ENCODE measurements at regions of chr20 and their contacts with region 1.

Region 1: DNA sequence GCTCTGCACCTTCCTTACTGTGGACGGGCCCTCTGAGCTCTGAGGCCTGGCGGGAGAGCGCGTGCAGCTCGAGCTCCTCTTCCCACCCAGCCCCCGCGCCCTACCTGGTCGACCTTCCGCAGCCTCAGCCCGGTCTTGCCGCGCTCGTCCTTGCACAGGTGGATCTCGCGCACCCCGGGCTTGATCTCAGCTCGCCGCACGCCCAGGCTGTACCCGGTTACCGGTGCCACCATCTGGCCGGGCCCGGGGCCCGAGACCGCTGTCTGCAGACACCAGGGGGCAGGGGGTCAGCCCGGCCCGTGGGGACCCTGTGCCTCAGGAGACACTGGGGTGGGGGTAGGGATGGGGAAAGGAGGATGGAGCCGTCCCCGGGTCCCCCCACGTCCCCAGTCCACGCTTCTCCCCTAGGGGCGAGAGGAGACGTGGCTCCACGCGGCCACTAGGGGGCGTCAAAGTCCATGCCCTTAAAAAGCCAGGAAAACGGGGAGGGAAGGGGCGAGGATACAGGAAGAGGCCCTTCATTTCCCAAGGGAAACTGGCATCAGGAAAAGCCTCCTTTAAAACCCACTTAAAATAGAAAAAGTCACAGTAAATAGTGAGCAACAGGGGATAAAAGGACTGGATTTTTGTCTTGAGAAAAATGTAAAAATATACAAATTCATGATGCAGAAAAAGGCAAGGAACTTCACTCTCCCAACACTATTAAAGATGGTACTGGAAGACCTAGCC is 15.5 kb downstream of the SDCBP2 start:
- DNase-seq: peak; percentile 73
- H3K4me3 ChIP-seq: peak overlapping the region in 1 of 4 donors; percentile 27
- H3K27ac ChIP-seq: no peak overlapping the region
- H3K4me1 ChIP-seq: peaks cover 0 to 9% (median 4%) of the 10 kb centered on the region in 4 donors
- H3K27me3 ChIP-seq: no peaks in the 10 kb centered on the region
- CTCF ChIP-seq: peak; percentile 95 to 99 (median 96)
- EP300 ChIP-seq: no peak
- POLR2A ChIP-seq: no peak

Region 2: GRCh38 chr20:1392823-1393506 is 79.6 kb after region 1 on chr20 and contains the start of gene FKBP1A:
- in situ Hi-C with region 1: loop called in 1 of 4 experiments (anchors 10 kb)
- intact Hi-C with region 1: no loop called
- DNase-seq: peak; percentile 93
- H3K4me3 ChIP-seq: peak within 1 kb of the TSS; percentile 83 to 97 (median 92)
- H3K27ac ChIP-seq: peak within 1 kb of the TSS; percentile 90 to 94 (median 92)
- H3K4me1 ChIP-seq: peaks cover 30 to 52% (median 44%) of the 10 kb centered on the region in 4 donors
- H3K27me3 ChIP-seq: no peaks in the 10 kb centered on the region
- CTCF ChIP-seq: peak in 2 of 5 experiments; percentile 39
- EP300 ChIP-seq: peak; percentile 28
- POLR2A ChIP-seq: peak; percentile 81
- total RNA-seq, gene FKBP1A: 120 to 202 (median 144) TPM

Region 3: DNA sequence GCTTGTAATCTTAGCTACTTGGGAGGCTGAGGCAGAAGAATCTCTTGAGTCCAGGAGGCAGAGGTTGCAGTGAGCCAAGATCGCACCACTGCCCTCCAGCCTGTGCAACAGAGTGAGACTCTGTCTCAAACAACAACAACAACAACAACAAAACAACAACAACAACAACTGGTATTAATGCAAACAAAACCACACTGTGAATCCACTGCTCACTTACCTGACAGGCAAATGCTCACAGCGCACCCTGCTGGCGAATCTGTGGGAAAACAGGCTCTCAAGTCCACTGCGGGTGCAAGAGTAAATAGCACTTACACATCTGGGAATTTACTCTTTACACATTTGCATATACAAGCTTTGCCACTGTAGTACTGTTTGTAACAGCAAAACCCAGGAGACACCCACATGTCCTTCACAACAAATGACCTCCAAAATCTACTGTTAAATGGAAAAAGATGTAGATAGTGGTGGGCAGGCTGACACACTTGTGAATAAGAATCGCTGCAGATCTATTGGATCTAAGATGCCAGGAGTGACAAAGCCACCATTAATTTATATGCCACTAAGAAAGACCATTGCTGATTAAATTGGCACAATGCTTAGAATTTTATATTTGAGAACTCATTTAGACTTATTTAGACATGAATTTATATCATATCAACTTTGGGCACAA is 124.0 kb after region 1 on chr20:
- in situ Hi-C with region 1: loop called (anchors 5 to 10 kb)
- intact Hi-C with region 1: loop called (anchors 1 kb)
- DNase-seq: peak; percentile 80
- H3K4me3 ChIP-seq: no peak overlapping the region
- H3K27ac ChIP-seq: no peak overlapping the region
- H3K4me1 ChIP-seq: peaks cover 0 to 11% (median 0%) of the 10 kb centered on the region in 4 donors
- H3K27me3 ChIP-seq: no peaks in the 10 kb centered on the region
- CTCF ChIP-seq: peak; percentile 79 to 89 (median 86)
- EP300 ChIP-seq: no peak
- POLR2A ChIP-seq: no peak

Region 4: GRCh38 chr20:1466211-1467081 is 153.0 kb after region 1 on chr20 and contains the start of gene NSFL1C:
- in situ Hi-C with region 1: no loop called
- intact Hi-C with region 1: loop called (anchors 10 kb)
- DNase-seq: peak; percentile 97
- H3K4me3 ChIP-seq: peak within 1 kb of the TSS; percentile 69 to 98 (median 88)
- H3K27ac ChIP-seq: peak within 1 kb of the TSS; percentile 89 to 95 (median 92)
- H3K4me1 ChIP-seq: peaks cover 11 to 61% (median 32%) of the 10 kb centered on the region in 4 donors
- H3K27me3 ChIP-seq: no peaks in the 10 kb centered on the region
- CTCF ChIP-seq: peak; percentile 66 to 99 (median 97)
- EP300 ChIP-seq: no peak
- POLR2A ChIP-seq: peak; percentile 56
- total RNA-seq, gene NSFL1C: 14.7 to 51.2 (median 48.8) TPM

Measured in transverse colon (tissue), 4 donors.